ENCODE measurements at regions of chr2 and their contacts with region 1.

Region 1: DNA sequence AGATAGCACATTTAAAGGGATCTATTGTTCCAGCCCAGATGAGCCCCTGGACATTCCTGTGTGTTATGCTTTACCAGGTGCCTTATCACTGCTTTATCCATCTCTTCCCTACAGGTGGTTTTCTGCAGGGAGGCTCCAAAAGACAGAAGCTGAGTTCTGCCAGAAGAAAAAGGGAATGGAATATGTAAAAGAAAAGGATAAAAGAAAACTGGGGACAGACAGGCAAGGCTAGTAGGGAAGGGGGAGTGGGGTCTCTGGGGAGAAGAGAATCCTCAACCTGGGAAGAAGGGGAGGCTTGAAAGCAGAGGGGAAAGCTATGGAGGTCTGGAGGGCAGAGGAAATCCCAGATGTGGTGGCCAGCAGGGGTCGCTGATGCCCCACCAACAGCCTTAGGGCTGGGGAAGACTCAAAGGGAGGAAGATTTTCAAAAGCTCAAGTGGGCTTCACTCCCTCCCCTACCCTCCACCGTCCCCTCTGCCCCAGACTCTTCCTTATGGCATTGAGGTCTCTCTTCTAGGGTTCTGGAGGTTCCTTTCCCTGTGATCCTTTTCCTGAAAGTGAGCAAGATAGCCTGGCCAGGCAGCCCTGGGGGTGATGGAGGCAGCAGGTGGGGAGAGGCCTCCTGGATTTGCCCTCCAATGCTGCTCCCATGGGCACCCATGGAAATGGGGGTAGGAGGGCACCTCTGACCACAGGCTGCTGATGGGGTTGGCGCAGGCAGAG is 178.1 kb upstream of the PKDCC start:
- DNase-seq: peak; percentile 59
- ATAC-seq: peak; percentile 95
- H3K4me3 ChIP-seq: no peak overlapping the region
- H3K27ac ChIP-seq: no peak overlapping the region
- H3K4me1 ChIP-seq: peaks cover 24% of the 10 kb centered on the region
- H3K27me3 ChIP-seq: peaks cover 2 to 30% of the 10 kb centered on the region in 2 experiments; a peak in 2 of 5 replicates
- CTCF ChIP-seq: peak; percentile 94
- EP300 ChIP-seq: no peak
- POLR2A ChIP-seq: no peak
- RAD21 ChIP-seq: peak; percentile 98

Region 2: DNA sequence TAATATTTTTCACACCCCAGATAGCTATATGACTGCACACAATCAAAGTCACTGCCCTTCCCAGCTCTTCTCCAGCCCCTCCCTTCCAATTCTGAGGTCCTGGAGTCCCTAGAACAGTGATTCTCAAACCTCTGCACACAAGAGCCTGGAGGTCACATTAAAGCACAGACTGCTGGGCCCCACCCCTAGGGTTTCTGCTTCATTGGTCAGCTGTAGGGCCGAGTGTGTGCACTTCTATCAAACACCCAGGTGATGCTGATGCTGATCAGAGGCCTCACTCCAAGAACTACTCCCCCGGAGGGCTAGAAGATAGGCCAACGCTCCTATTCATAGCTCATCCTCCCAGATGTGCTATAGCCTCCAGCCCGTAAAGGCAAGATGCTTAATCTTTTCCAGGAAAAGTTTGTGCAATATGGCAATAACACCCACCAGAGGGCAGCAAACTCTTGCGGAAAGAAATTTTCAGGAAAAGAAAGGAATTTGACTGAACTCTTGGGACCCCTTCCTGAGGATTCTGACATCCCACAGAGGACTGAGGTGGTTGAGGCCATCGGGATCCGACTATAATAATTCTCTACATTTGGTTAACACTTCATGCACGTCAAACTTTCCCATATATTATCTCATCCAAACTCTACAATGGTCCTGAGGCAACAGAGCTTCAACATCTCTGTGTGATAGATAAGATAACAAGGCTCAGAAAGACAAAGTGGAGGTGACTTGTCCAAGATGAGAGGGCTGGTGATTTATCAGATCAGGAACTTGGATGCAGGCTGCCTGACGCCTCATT is 16.1 kb before region 1 on chr2:
- CTCF ChIA-PET with region 1: interaction called, 12 read pairs
- POLR2A ChIA-PET with region 1: no interaction called
- in situ Hi-C with region 1: no loop called
- intact Hi-C with region 1: loop called (anchors 2 kb)
- DNase-seq: peak; percentile 71
- ATAC-seq: peak; percentile 72
- H3K4me3 ChIP-seq: no peak overlapping the region
- H3K27ac ChIP-seq: no peak overlapping the region
- H3K4me1 ChIP-seq: peaks cover 20% of the 10 kb centered on the region
- H3K27me3 ChIP-seq: 0 out of 5 replicates have a peak, but pooled peaks cover 0 to 6% of the 10 kb centered on the region in 2 experiments
- CTCF ChIP-seq: peak; percentile 87
- EP300 ChIP-seq: no peak; a peak in 1 of 4 replicates
- POLR2A ChIP-seq: no peak
- RAD21 ChIP-seq: peak; percentile 81

Region 3: GRCh38 chr2:42072349-42073118 is 202.8 kb after region 1 on chr2:
- CTCF ChIA-PET with region 1: interaction called, 13 read pairs
- POLR2A ChIA-PET with region 1: no interaction called
- in situ Hi-C with region 1: no loop called
- intact Hi-C with region 1: no loop called
- DNase-seq: peak; percentile 54
- ATAC-seq: peak; percentile 78
- H3K4me3 ChIP-seq: no peak overlapping the region
- H3K27ac ChIP-seq: no peak overlapping the region
- H3K4me1 ChIP-seq: peaks cover 28% of the 10 kb centered on the region
- H3K27me3 ChIP-seq: peaks cover 2 to 38% of the 10 kb centered on the region in 2 experiments; a peak in 3 of 5 replicates
- CTCF ChIP-seq: peak; percentile 61
- EP300 ChIP-seq: no peak
- POLR2A ChIP-seq: no peak
- RAD21 ChIP-seq: 0 out of 2 replicates have a peak, but pooled peaks have one; percentile 47

Region 4: DNA sequence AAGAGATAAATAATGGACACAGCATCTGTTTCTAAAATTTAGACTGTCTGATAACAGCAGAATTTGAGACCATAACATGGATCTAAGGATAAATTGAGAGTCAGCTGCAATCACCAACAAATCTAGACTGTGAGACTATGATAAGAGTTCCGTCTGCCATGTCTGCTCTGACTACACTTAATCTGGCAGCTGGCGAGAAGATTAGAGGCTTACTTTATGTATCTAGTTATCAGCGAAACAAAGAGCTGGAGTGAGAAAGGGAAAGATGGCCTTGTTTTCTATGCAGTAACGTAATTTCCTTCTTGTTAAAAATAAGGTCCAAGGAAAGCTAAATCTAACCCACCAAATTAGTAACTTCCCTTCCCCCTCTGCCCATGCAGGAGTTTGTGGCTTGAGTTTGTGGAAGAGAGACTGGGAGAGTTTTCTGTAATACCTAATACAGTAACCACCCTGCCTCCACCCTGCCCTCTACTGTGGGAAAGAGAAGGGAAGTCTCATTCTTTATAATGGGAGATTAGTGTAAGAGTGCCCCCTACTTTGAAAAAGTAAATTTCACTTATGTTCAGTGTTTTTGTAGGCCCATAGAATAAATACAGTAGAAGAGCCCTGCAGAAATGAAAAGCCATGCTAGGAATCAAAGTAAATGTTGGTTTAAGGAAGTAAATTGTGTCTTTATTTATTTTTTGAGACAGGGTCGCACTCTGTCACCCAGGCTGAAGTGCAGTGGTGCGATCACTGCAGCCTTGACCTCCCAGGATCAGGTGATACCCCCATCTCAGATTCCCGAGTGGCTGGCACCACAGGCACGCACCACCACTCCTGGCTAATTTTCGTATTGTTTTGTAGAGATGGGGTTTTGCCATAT is 326.9 kb after region 1 on chr2:
- CTCF ChIA-PET with region 1: no interaction called
- POLR2A ChIA-PET with region 1: no interaction called
- in situ Hi-C with region 1: loop called (anchors 25 kb)
- intact Hi-C with region 1: no loop called
- DNase-seq: peak; percentile 83
- ATAC-seq: peak; percentile 73
- H3K4me3 ChIP-seq: peak overlapping the region in 1 of 3 experiments; percentile 41; a peak in 1 of 6 replicates
- H3K27ac ChIP-seq: peak overlapping the region; percentile 78
- H3K4me1 ChIP-seq: peaks cover 100% of the 10 kb centered on the region
- H3K27me3 ChIP-seq: no peaks in the 10 kb centered on the region
- CTCF ChIP-seq: peak; percentile 80
- EP300 ChIP-seq: peak; percentile 62 to 87
- POLR2A ChIP-seq: no peak
- RAD21 ChIP-seq: peak; percentile 85

Region 5: DNA sequence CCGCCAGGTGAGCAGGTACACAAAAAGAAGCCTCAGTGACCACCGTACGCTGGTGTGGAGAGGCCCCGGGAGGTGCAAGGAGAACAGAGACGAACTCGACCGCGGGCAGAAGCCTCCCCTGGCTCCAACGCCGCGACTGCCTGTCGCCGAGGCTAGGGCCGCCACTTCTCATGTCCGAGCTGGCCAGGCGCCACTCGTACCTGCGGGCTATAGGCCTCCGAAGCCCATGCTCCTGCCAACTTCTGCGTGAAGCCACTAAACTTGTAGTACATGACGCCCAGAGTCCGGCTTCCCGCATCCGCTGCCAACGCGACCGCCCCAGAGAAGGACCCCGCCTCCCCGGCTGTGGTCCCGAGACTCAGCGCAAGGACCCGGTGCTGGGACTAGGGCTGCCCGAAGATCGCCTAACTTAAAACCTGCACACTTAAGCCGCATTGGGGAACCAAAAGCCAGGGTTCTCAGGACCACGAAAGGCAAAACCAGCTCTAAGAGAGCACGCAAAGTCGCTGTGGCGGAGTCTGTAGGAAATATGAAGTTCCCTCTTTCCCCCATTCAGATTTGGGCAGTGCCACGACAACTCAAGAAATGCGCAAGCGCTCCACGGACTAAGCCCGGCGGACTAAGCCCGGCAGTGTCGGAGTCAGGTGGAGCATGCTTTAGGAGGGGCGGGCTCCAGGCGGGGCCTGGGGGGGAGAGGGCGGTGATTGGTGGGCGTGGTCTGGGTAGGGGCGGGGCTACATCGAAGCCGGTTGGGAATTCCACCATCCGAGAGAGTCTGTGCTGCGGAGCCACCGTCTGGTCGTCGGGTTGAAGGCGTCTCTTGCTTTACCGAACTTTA is 491.4 kb after region 1 on chr2 and contains the start of gene COX7A2L:
- CTCF ChIA-PET with region 1: no interaction called
- POLR2A ChIA-PET with region 1: no interaction called
- in situ Hi-C with region 1: loop called (anchors 25 kb)
- intact Hi-C with region 1: no loop called
- DNase-seq: peak; percentile 96
- ATAC-seq: peak; percentile 92
- H3K4me3 ChIP-seq: peak within 1 kb of the TSS; percentile 84 to 98 (median 94)
- H3K27ac ChIP-seq: peak within 1 kb of the TSS; percentile 96
- H3K4me1 ChIP-seq: peaks cover 43% of the 10 kb centered on the region
- H3K27me3 ChIP-seq: no peaks in the 10 kb centered on the region; a peak in 1 of 5 replicates
- CTCF ChIP-seq: peak; percentile 82
- EP300 ChIP-seq: no peak
- POLR2A ChIP-seq: peak; percentile 87 to 94
- RAD21 ChIP-seq: peak; percentile 33
- total RNA-seq, gene COX7A2L: 201 and 272 TPM in 2 replicates

Measured in HepG2 (cell line).